ENCODE measurements at regions of chr16 and their contacts with region 1.

Region 1: DNA sequence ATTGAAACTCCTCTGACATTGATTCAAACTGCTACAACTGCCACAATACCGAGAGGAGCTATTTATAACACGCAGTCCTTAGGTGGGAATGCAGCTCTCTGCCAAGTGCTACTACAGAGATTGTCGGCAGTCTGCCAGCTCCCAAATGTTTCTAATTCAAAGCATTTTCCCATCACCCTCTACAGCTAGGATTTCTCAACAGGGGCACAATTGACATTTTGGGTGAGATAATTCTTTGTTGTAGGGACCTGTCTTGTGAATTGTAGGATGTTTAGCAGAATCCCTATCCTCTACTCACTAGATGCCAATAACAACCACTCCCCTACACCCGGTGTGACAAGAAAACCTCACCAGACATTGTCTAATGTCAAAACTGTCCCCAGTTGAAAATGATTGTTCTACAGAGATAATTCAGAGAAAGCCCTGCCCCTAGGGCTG is 7.8 kb upstream of the N4BP1 start:
- DNase-seq: no peak
- H3K4me3 ChIP-seq: no peak overlapping the region
- H3K27ac ChIP-seq: no peak overlapping the region
- H3K4me1 ChIP-seq: no peaks in the 10 kb centered on the region
- H3K27me3 ChIP-seq: no peaks in the 10 kb centered on the region
- CTCF ChIP-seq: no peak

Region 2: GRCh38 chr16:48373258-48374029 is 244.3 kb before region 1 on chr16:
- intact Hi-C with region 1: loop called (anchors 5 kb)
- DNase-seq: no peak
- H3K4me3 ChIP-seq: no peak overlapping the region
- H3K27ac ChIP-seq: no peak overlapping the region
- H3K4me1 ChIP-seq: no peaks in the 10 kb centered on the region
- H3K27me3 ChIP-seq: no peaks in the 10 kb centered on the region
- CTCF ChIP-seq: no peak